G401 (cell line): ENCODE measurements at regions of chr6 and their contacts with region 1.

Region 1: GRCh38 chr6:20401205-20402091 is at the start of gene E2F3:
- DNase-seq: peak; percentile 99
- total RNA-seq, gene E2F3: 9.0 and 12.5 TPM in 2 replicates

Region 2: GRCh38 chr6:20534295-20535262 is 133.1 kb after region 1 on chr6 and contains the start of gene CDKAL1:
- in situ Hi-C with region 1: loop called (anchors 25 kb)
- DNase-seq: peak; percentile 89
- total RNA-seq, gene CDKAL1: 25.7 and 25.8 TPM in 2 replicates